ENCODE measurements at regions of chr11 and their contacts with region 1.

Region 1: GRCh38 chr11:58675334-58676155 is 53.1 kb downstream of the CNTF start:
- DNase-seq: peak; percentile 67 to 87 (median 73)
- ATAC-seq: peak; percentile 88 to 93 (median 91)
- H3K4me3 ChIP-seq: no peak overlapping the region
- H3K27ac ChIP-seq: no peak overlapping the region
- H3K4me1 ChIP-seq: no peaks in the 10 kb centered on the region
- H3K27me3 ChIP-seq: peaks cover 0 to 19% (median 3%) of the 10 kb centered on the region in 9 donors
- CTCF ChIP-seq: peak; percentile 83 to 98 (median 90)
- POLR2A ChIP-seq: no peak

Region 2: GRCh38 chr11:58471892-58472291 is 203.7 kb before region 1 on chr11:
- intact Hi-C with region 1: no loop called
- DNase-seq: no peak
- ATAC-seq: no peak
- H3K4me3 ChIP-seq: no peak overlapping the region
- H3K27ac ChIP-seq: no peak overlapping the region
- H3K4me1 ChIP-seq: no peaks in the 10 kb centered on the region
- H3K27me3 ChIP-seq: no peaks in the 10 kb centered on the region
- CTCF ChIP-seq: no peak
- POLR2A ChIP-seq: no peak

Region 3: DNA sequence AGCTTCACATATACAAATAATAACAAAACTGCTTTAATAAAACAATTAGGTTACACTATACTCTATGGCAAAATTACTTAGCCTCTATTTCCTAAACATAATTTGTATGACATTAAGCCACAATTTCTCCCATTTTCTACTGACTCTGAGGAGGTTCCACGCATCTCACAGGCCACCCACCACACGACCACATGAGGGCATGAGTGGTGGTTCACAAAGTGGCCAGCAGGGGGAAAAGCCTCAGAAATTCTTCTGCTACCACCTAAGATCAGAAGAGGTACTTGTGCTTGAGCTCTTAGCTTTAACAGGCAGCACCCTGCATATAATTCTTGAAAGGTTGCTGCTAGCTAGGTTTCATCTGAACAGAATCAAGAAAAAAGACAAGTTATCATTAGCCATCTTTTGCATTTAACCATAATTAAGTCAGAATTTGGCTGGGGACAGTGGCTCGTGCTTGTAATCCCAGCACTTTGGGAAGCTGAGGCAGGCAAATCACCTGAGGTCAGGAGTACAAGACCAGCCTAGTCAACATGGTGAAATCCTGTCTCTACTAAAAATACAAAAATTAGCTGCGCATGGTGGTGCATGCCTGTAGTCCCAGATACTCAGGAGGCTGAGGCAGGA is 107.5 kb before region 1 on chr11:
- intact Hi-C with region 1: loop called in 3 of 10 experiments (anchors 5 kb)
- DNase-seq: peak in 3 of 5 donors; percentile 20 to 44 (median 30)
- ATAC-seq: peak in 2 of 4 donors; percentile 71 to 75
- H3K4me3 ChIP-seq: no peak overlapping the region
- H3K27ac ChIP-seq: no peak overlapping the region
- H3K4me1 ChIP-seq: peaks cover 0 to 24% (median 1%) of the 10 kb centered on the region in 12 donors
- H3K27me3 ChIP-seq: no peaks in the 10 kb centered on the region
- CTCF ChIP-seq: peak; percentile 55 to 84 (median 70)
- POLR2A ChIP-seq: no peak

Region 4: GRCh38 chr11:58573451-58574104 is 102.0 kb before region 1 on chr11:
- intact Hi-C with region 1: loop called in 8 of 10 experiments (anchors 1 to 5 kb)
- DNase-seq: peak in 3 of 5 donors; percentile 36 to 52 (median 50)
- ATAC-seq: peak in 2 of 4 donors; percentile 1 to 33
- H3K4me3 ChIP-seq: peak overlapping the region in 2 of 12 donors; percentile 8 to 56
- H3K27ac ChIP-seq: peak overlapping the region in 9 of 12 donors; percentile 13 to 100 (median 41)
- H3K4me1 ChIP-seq: peaks cover 4 to 59% (median 29%) of the 10 kb centered on the region in 12 donors
- H3K27me3 ChIP-seq: no peaks in the 10 kb centered on the region
- CTCF ChIP-seq: no peak
- POLR2A ChIP-seq: no peak

Region 5: GRCh38 chr11:58688789-58689503 is 13.4 kb after region 1 on chr11:
- intact Hi-C with region 1: no loop called
- DNase-seq: no peak
- ATAC-seq: no peak
- H3K4me3 ChIP-seq: no peak overlapping the region
- H3K27ac ChIP-seq: no peak overlapping the region
- H3K4me1 ChIP-seq: no peaks in the 10 kb centered on the region
- H3K27me3 ChIP-seq: no peaks in the 10 kb centered on the region
- CTCF ChIP-seq: no peak
- POLR2A ChIP-seq: no peak

Measured in heart left ventricle (tissue), 16 donors.